ENCODE measurements at regions of chr3 and their contacts with region 1.

Region 1: DNA sequence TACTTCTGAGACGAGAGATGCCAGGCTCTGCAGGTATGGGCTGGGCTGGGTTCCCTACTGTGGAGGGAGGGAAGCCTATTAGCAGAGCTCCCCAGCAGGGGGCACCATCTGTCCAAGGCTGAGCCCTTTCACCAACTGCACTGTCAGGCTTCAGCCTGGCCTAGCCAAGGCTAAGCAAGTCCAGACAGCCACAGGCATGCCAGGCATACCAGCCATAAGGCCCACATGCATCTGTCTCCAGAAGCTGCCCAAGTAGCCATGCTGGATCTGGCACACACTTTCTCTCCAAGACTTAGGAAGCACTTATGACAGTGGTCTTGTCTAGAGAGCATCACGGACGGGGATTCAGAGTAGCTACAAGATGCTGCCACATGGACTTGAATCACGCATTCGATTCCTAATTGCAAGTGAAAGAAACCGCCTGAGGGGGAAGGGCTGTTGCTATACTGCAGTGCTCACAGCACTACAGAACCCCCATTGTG is 28.3 kb downstream of the RUVBL1 start:
- DNase-seq: peak; percentile 83
- H3K4me3 ChIP-seq: no peak overlapping the region
- H3K27ac ChIP-seq: peak overlapping the region; percentile 30
- H3K4me1 ChIP-seq: peaks cover 15% of the 10 kb centered on the region
- H3K27me3 ChIP-seq: no peaks in the 10 kb centered on the region
- CTCF ChIP-seq: peak; percentile 89 to 92
- POLR2A ChIP-seq: no peak

Region 2: GRCh38 chr3:127762077-127762786 is 333.0 kb before region 1 on chr3:
- CTCF ChIA-PET with region 1: no interaction called
- POLR2A ChIA-PET with region 1: no interaction called
- dilution Hi-C with region 1: no loop called
- intact Hi-C with region 1: no loop called
- DNase-seq: peak; percentile 33
- H3K4me3 ChIP-seq: no peak overlapping the region
- H3K27ac ChIP-seq: no peak overlapping the region
- H3K4me1 ChIP-seq: peaks cover 6% of the 10 kb centered on the region
- H3K27me3 ChIP-seq: no peaks in the 10 kb centered on the region
- CTCF ChIP-seq: no peak
- POLR2A ChIP-seq: no peak

Region 3: DNA sequence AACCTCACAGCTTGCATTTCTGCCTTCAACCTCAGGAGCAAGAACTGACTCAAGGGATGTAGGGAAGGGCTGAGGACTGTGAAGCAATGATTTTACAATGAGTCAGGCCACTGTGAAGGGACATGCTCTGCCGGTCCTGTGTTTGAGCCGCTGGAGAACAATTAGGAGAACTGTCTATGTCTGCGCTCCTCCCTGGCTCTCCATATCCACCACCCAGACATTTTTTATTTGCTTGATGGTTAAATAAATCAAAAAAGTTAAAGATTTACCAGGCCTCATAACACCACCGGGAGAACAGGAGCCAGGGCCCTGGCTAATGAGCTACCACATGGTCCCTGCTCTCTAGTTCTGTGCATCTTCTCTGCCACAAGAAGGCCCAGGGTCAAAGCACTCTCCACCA is 13.4 kb before region 1 on chr3:
- CTCF ChIA-PET with region 1: interaction called, 21 read pairs
- POLR2A ChIA-PET with region 1: no interaction called
- dilution Hi-C with region 1: no loop called
- intact Hi-C with region 1: no loop called
- DNase-seq: no peak
- H3K4me3 ChIP-seq: no peak overlapping the region
- H3K27ac ChIP-seq: no peak overlapping the region
- H3K4me1 ChIP-seq: peaks cover 8% of the 10 kb centered on the region
- H3K27me3 ChIP-seq: no peaks in the 10 kb centered on the region
- CTCF ChIP-seq: no peak
- POLR2A ChIP-seq: no peak

Region 4: GRCh38 chr3:128123538-128124368 is 28.5 kb after region 1 on chr3 and contains the start of gene RUVBL1:
- CTCF ChIA-PET with region 1: interaction called, 47 read pairs
- POLR2A ChIA-PET with region 1: no interaction called
- dilution Hi-C with region 1: no loop called
- intact Hi-C with region 1: no loop called
- DNase-seq: peak; percentile 98
- H3K4me3 ChIP-seq: peak within 1 kb of the TSS; percentile 59 to 85 (median 78)
- H3K27ac ChIP-seq: peak within 1 kb of the TSS; percentile 65
- H3K4me1 ChIP-seq: peaks cover 12% of the 10 kb centered on the region
- H3K27me3 ChIP-seq: peaks cover 0 to 2% of the 10 kb centered on the region in 2 experiments
- CTCF ChIP-seq: no peak
- POLR2A ChIP-seq: peak; percentile 67
- total RNA-seq, gene RUVBL1: 57.0 and 58.5 TPM in 2 replicates

Region 5: DNA sequence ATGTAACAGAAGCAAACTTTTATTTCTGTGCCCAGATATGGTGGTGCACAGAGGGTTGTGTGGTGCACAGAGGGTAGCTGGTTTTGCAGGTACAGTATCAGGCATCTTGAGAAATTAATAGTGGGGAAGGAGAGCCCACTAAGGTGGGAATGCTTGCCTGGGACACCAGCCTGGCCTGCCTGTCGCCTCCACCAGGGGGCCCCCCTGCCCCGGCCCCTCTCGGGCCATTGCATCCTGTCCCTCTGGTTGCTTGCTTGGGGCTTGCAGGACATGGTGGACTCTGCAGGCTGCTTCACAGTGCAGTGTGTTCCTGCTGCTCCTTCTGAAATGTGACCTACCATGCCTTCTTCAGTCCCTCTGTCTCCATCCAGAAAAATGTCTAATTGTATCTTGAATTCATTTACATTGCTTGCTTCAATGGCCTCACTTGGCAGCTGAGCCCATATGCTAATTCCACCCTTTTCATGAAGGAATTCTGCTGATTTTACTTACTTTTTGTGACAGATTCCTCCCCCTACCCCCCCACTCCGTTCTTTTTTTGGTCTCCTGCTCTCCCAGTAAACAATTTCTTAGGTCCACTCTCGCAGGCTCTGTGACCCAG is 131.6 kb after region 1 on chr3:
- CTCF ChIA-PET with region 1: interaction called, 11 read pairs
- POLR2A ChIA-PET with region 1: no interaction called
- dilution Hi-C with region 1: no loop called
- intact Hi-C with region 1: no loop called
- DNase-seq: peak; percentile 59
- H3K4me3 ChIP-seq: no peak overlapping the region
- H3K27ac ChIP-seq: no peak overlapping the region
- H3K4me1 ChIP-seq: no peaks in the 10 kb centered on the region
- H3K27me3 ChIP-seq: no peaks in the 10 kb centered on the region
- CTCF ChIP-seq: peak; percentile 89 to 98
- POLR2A ChIP-seq: no peak

Region 6: DNA sequence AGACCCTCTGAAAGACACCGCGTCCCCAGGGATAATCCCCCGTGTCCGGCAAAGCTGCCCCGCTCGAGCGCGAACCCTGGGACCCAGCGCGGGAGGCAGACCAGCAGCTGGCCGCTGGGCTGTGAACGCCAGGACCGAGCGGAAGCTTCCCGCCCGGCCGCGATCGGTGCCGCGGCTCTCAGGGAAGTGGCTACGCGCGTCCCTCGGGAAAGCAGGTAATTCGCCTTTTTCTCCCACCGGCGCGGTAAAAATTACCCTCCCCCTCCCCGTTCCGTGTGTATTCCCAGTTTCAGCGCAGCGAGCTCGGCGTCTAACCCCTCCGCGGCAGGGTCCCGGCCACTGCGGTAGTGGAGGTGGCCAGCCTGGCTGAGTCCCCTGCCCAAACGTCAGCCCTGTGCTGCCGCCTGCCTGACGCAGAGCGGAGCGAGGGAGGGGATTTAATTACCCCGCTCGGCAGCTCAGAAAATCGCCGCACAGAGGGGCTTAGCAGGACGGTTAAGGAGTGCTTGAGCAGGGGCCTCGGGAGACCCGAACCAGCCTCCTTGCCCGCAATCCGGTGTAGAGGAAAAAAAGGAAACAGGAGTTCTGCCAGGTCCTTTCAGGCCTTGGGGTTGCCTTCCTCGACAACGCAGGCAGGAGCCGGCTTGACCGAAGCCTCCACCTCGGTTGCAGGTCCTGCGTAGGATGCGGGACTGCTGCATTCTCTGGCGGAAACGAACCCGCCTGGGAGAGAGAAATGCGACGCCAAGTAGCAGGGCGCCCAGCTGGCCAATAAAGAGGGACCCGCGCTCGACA is 394.8 kb after region 1 on chr3:
- CTCF ChIA-PET with region 1: no interaction called
- POLR2A ChIA-PET with region 1: no interaction called
- dilution Hi-C with region 1: no loop called
- intact Hi-C with region 1: loop called (anchors 5 kb)
- DNase-seq: peak; percentile 77
- H3K4me3 ChIP-seq: peak overlapping the region; percentile 77 to 95 (median 83)
- H3K27ac ChIP-seq: peak overlapping the region; percentile 97
- H3K4me1 ChIP-seq: peaks cover 15% of the 10 kb centered on the region
- H3K27me3 ChIP-seq: no peaks in the 10 kb centered on the region
- CTCF ChIP-seq: no peak
- POLR2A ChIP-seq: no peak

Measured in endothelial cell of umbilical vein (primary cell).